Dorsolateral prefrontal cortex (tissue), 120 donors: ENCODE measurements at regions of chr15 and their contacts with region 1.

Region 1: GRCh38 chr15:60326824-60327654 is 70.7 kb downstream of the ANXA2 start:
- DNase-seq: peak in 2 of 10 donors; percentile 6 to 16
- H3K4me3 ChIP-seq: no peak overlapping the region
- H3K27ac ChIP-seq: no peak overlapping the region
- H3K27me3 ChIP-seq: peaks cover 0 to 73% (median 39%) of the 10 kb centered on the region in 45 donors
- CTCF ChIP-seq: peak; percentile 52 to 94 (median 85)

Region 2: DNA sequence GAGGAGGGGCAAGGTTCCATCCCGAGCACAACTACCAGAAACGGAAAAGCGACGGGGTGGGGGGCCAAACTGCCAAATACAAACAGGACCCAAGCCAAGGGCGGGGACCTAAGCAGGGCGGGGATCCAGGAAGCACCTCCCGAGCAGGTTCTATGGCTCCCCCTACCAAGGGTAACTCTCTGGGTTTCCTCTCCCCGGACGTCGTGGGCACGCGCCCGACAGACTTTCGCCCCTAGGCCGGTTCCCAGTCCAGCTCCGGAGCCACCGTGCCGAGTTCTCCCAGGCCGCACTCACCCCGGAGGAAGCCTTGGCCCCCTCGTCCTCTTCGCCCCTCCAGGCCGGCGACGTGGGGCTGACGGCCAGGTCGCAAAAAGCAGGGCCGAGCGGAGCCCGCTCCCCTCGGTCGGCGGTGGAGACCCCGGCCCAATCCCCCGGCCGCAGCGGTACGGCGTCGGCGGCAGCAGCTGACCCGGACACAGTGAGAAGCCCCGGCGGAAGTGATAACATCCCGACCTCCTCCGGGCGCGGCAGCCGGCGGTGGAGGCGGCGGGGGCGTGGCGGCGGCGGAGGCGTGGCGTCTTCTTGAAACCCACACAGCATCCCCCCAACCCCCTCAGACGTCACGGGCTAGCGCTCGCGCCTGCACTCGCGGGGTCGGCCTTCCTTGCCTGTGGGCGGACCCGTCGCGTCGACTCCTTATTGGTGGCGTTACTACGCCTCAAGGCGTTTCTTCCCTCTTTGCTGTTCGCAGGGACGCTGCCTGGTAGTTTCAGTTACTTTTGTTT is 638.0 kb before region 1 on chr15 and contains the start of gene BNIP2:
- intact Hi-C with region 1: loop called in 1 of 2 experiments (anchors 2 kb)
- DNase-seq: peak; percentile 90 to 96 (median 94)
- H3K4me3 ChIP-seq: peak within 1 kb of the TSS; percentile 74 to 100 (median 97)
- H3K27ac ChIP-seq: peak within 1 kb of the TSS; percentile 49 to 98 (median 91)
- H3K27me3 ChIP-seq: no peaks in the 10 kb centered on the region
- CTCF ChIP-seq: peak in 30 of 56 donors; percentile 2 to 52 (median 27)
- total RNA-seq, gene BNIP2: 30.0 to 65.9 (median 43.4) TPM

Region 3: DNA sequence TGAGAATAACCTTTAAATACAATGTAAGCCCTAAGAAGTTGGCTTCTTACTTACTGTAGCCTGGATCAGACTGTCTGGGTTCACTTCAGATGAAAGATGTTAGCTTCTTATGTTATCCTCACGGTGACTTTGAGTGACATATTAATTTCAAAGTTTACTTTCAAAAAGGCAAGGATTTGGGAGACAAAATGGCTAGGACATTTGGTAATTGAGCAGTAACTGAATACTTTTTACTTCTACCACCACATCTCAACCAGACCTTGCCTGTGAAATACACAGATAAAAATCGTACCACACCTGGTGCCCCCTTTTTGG is 601.9 kb before region 1 on chr15:
- intact Hi-C with region 1: loop called (anchors 10 kb)
- DNase-seq: no peak
- H3K4me3 ChIP-seq: no peak overlapping the region
- H3K27ac ChIP-seq: no peak overlapping the region
- H3K27me3 ChIP-seq: peaks cover 0 to 29% (median 3%) of the 10 kb centered on the region in 45 donors
- CTCF ChIP-seq: peak in 9 of 56 donors; percentile 0 to 26 (median 8)

Region 4: GRCh38 chr15:60179786-60180391 is 147.2 kb before region 1 on chr15:
- intact Hi-C with region 1: no loop called
- DNase-seq: peak in 1 of 10 donors; percentile 14
- H3K4me3 ChIP-seq: no peak overlapping the region
- H3K27ac ChIP-seq: no peak overlapping the region
- H3K27me3 ChIP-seq: peaks cover 0 to 16% (median 0%) of the 10 kb centered on the region in 45 donors
- CTCF ChIP-seq: peak; percentile 47 to 88 (median 74)

Region 5: DNA sequence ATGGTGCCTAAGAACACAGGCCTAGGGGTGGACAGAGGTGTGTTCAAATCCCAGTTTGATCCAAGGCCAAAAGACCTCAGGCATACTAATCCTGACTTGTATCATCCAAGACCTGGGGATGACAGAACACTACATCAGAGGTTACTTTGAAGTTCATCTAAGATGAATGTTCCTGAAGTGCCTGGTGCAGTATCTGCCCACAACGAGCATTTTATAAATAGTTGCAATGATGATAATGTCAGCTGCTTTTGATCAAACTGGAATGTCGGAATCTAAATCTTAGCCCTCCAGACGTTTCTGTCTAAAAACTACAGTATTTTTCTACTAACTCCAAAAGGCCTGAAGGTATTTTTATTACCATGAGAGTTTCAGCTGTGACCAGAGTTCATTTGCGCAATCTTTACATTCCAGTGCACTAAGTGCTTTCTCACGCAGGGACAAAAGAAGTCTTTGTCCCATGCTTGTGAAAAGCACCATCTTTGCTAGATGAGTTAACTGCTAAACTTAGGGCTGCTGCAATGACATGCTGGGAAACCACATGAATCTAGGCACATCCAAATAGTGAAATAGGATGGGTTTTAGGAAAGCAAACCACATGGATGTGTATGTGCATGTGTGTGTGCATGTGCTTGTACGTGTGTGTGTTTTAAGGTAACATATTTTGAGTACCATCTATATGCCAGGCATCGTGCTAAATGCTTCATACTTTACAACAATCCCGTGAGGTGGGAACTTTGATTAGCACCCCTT is 52.7 kb after region 1 on chr15:
- intact Hi-C with region 1: no loop called
- DNase-seq: no peak
- H3K4me3 ChIP-seq: no peak overlapping the region
- H3K27ac ChIP-seq: no peak overlapping the region
- H3K27me3 ChIP-seq: peaks cover 0 to 6% (median 0%) of the 10 kb centered on the region in 45 donors
- CTCF ChIP-seq: no peak